Caco-2 (cell line): ENCODE measurements at regions of chr7 and their contacts with region 1.

Region 1: GRCh38 chr7:85535974-85536729 is 349.3 kb upstream of the SEMA3D start:
- DNase-seq: no peak
- H3K4me3 ChIP-seq: no peak overlapping the region
- H3K4me3 Mint-ChIP-seq: no peak overlapping the region
- H3K27ac Mint-ChIP-seq: no peak overlapping the region
- H3K4me1 ChIP-seq: no peaks in the 10 kb centered on the region
- H3K4me1 Mint-ChIP-seq: no peaks in the 10 kb centered on the region
- H3K27me3 ChIP-seq: no peaks in the 10 kb centered on the region
- H3K27me3 Mint-ChIP-seq: peaks cover 4% of the 10 kb centered on the region
- CTCF ChIP-seq: no peak

Region 2: DNA sequence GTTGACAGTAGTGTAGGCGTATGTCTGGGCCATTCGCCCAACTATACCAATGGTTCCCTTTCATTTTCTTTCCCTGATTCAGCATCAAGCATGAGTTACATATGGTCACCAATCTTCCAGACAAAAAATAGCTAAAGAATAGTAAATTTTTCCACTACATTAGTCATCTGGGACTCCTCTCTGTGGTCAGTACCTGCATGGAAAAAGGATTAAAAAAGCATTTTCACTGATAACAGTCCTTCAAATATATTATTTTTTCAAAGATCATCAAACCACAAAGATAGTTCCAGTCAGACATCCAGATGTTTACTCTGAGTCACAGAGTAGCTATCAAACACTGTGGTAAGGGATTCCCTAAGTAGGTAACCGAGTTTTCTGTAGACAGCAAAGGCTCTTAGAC is 46.7 kb before region 1 on chr7:
- CTCF ChIA-PET with region 1: no interaction called
- POLR2A ChIA-PET with region 1: no interaction called
- intact Hi-C with region 1: loop called (anchors 1 kb)
- DNase-seq: no peak
- H3K4me3 ChIP-seq: no peak overlapping the region
- H3K4me3 Mint-ChIP-seq: no peak overlapping the region
- H3K27ac Mint-ChIP-seq: no peak overlapping the region
- H3K4me1 ChIP-seq: no peaks in the 10 kb centered on the region
- H3K4me1 Mint-ChIP-seq: peaks cover 6% of the 10 kb centered on the region
- H3K27me3 ChIP-seq: no peaks in the 10 kb centered on the region
- H3K27me3 Mint-ChIP-seq: no peaks in the 10 kb centered on the region
- CTCF ChIP-seq: no peak

Region 3: DNA sequence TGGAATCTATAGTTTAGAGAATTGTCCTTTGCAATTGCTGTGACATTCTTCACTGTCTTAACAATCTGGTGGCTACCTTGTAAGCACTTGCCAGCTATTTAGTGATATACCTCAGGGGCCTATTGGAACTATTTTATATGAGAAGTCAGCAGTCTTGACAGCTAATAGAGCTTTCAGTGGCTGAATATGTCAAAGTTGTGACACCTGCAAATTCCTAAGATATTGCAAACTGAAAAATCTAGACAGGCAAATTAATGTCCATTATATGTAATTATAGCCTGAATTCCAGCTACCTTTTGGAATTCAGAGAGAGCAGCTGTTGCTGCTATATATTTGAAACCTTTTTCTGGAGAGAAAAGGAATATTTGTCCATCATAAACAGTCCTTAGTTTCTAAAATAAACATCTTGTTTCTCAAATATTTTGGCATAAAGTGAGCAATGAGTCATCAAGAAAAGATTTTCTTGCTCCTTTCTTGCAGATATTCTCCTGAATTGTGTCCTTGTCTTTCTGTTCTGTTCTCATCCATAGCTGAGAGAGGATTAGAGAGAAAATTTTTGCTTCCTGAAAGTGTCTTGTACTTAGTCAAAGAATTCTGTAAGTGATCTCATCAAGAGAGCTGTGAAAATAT is 59.6 kb after region 1 on chr7:
- CTCF ChIA-PET with region 1: no interaction called
- POLR2A ChIA-PET with region 1: no interaction called
- intact Hi-C with region 1: no loop called
- DNase-seq: no peak
- H3K4me3 ChIP-seq: no peak overlapping the region
- H3K4me3 Mint-ChIP-seq: no peak overlapping the region
- H3K27ac Mint-ChIP-seq: no peak overlapping the region
- H3K4me1 ChIP-seq: peaks cover 36% of the 10 kb centered on the region
- H3K4me1 Mint-ChIP-seq: peaks cover 19% of the 10 kb centered on the region
- H3K27me3 ChIP-seq: no peaks in the 10 kb centered on the region
- H3K27me3 Mint-ChIP-seq: no peaks in the 10 kb centered on the region
- CTCF ChIP-seq: no peak